ENCODE measurements at regions of chr11 and their contacts with region 1.

Region 1: DNA sequence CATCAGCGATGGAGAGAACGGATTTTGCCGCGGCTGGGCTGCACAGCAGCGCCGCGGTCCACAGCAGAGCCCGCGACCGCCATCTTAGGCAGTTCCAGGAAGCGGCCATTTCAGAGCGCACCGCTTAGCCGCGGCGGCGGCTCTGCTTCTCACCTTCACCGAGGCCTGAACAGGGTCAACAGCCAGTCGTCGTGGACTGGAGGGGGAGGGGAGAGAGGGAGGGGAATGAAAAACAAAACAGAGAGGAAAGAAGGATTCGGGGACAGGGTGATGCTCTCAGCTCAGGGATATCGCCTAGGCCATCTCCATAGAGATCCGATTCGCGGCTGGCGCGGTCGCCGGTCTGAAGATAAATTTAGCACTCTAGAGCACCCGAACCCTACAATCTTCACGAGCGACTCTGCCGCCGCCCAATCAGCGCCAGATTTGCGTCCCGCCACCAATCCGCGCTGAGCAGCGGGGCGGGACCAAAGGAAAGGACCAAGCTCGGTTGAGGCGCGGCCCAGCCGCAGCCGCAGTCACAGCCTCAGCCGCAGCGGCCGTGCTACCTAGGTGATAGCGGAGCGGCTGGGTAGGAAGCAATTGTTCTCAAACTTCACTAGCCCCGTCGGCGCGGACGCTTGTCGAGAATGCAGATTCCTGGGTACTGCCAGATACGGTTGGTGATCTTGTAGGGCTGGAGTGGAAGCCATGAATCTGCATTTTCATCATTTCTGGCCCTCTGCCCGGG is at the start of gene ZBED5:
- DNase-seq: peak; percentile 97 to 98 (median 98)
- ATAC-seq: peak; percentile 96 to 98 (median 97)
- H3K4me3 ChIP-seq: peak within 1 kb of the TSS; percentile 62 to 89 (median 80)
- H3K27ac ChIP-seq: peak within 1 kb of the TSS; percentile 93 to 99 (median 96)
- H3K4me1 ChIP-seq: peaks cover 0 to 61% (median 23%) of the 10 kb centered on the region in 12 donors
- H3K27me3 ChIP-seq: no peaks in the 10 kb centered on the region
- CTCF ChIP-seq: peak in 4 of 12 donors; percentile 31 to 42 (median 38)
- POLR2A ChIP-seq: peak in 1 of 2 donors; percentile 98
- total RNA-seq, gene ZBED5: 26.3 to 49.1 (median 38.9) TPM

Region 2: GRCh38 chr11:10750838-10751580 is 106.9 kb before region 1 on chr11 and contains the start of gene CTR9:
- intact Hi-C with region 1: loop called in 1 of 10 experiments (anchors 2 kb)
- DNase-seq: peak; percentile 93 to 96 (median 96)
- ATAC-seq: peak; percentile 96 to 98 (median 98)
- H3K4me3 ChIP-seq: peak within 1 kb of the TSS; percentile 61 to 98 (median 92)
- H3K27ac ChIP-seq: peak within 1 kb of the TSS; percentile 87 to 98 (median 92)
- H3K4me1 ChIP-seq: peaks cover 0 to 25% (median 14%) of the 10 kb centered on the region in 12 donors
- H3K27me3 ChIP-seq: no peaks in the 10 kb centered on the region
- CTCF ChIP-seq: peak in 7 of 12 donors; percentile 16 to 59 (median 34)
- POLR2A ChIP-seq: peak in 1 of 2 donors; percentile 93
- total RNA-seq, gene CTR9: 14.7 to 28.4 (median 20.8) TPM

Region 3: DNA sequence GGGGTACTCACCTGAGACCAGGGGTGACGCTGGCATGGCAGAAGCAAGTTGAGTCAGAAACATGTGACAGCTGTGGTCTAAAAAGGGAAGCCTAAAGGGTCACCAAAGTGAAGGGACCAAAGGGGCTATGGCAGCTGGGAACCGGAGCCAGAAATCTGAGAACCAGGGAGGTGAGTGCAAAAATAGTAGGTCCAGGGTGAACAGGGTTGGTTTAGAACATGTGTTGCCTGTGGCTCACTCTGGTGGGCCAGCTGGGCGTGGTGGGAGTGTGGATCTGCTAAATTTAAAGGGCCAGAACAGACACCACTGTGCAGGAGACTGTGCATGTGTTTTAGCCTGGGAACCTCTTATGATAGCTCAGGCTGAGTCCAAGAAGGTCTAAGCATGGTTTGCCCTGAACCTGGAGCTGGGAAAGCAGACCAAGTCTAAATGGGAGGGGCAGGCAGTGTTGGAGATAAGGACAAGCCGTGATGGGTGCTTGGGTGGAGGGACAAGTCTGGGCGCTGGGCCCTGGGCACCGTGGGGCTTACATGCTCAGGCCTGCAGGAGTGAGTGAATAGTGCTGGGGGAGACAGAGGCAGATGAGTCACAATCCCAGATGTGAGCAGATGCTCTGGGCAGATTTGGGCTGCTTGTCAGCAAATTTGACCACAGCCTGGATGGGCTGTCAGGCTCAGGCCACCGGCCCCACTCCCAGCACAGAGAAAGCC is 41.4 kb after region 1 on chr11:
- intact Hi-C with region 1: loop called (anchors 1 to 10 kb)
- DNase-seq: peak; percentile 45 to 81 (median 75)
- ATAC-seq: peak; percentile 21 to 77 (median 68)
- H3K4me3 ChIP-seq: peak overlapping the region in 1 of 12 donors; percentile 4
- H3K27ac ChIP-seq: peak overlapping the region; percentile 51 to 98 (median 90)
- H3K4me1 ChIP-seq: peaks cover 10 to 55% (median 33%) of the 10 kb centered on the region in 12 donors
- H3K27me3 ChIP-seq: no peaks in the 10 kb centered on the region
- CTCF ChIP-seq: no peak
- POLR2A ChIP-seq: no peak

Region 4: GRCh38 chr11:10906513-10906912 is 48.6 kb after region 1 on chr11:
- intact Hi-C with region 1: loop called in 4 of 10 experiments (anchors 2 to 10 kb)
- DNase-seq: no peak
- ATAC-seq: peak in 3 of 4 donors; percentile 35 to 60 (median 40)
- H3K4me3 ChIP-seq: no peak overlapping the region
- H3K27ac ChIP-seq: no peak overlapping the region
- H3K4me1 ChIP-seq: peaks cover 0 to 22% (median 3%) of the 10 kb centered on the region in 12 donors
- H3K27me3 ChIP-seq: no peaks in the 10 kb centered on the region
- CTCF ChIP-seq: peak in 9 of 12 donors; percentile 7 to 47 (median 26)
- POLR2A ChIP-seq: no peak

Region 5: DNA sequence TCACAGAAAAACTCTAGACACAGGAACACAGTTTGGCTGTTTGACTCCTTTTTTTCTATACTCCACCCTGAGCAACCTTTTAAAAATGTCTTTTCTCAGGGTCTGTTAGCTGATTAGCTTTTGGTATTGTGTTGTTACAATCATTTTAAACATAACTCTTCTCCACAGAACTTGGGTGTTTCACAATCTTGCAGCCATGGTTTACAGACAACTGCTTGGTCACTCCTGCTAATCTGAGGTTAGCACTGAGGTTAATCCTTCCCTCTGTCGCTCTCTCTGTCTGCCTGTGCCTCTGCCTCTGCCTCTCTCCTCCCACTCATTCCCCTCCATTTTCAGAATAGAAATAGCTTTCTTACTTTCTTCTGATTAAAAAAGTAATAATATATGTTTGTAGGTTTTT is 62.3 kb after region 1 on chr11:
- intact Hi-C with region 1: loop called in 1 of 10 experiments (anchors 10 kb)
- DNase-seq: no peak
- ATAC-seq: no peak
- H3K4me3 ChIP-seq: no peak overlapping the region
- H3K27ac ChIP-seq: no peak overlapping the region
- H3K4me1 ChIP-seq: peaks cover 0 to 3% (median 0%) of the 10 kb centered on the region in 12 donors
- H3K27me3 ChIP-seq: no peaks in the 10 kb centered on the region
- CTCF ChIP-seq: no peak
- POLR2A ChIP-seq: no peak

Region 6: DNA sequence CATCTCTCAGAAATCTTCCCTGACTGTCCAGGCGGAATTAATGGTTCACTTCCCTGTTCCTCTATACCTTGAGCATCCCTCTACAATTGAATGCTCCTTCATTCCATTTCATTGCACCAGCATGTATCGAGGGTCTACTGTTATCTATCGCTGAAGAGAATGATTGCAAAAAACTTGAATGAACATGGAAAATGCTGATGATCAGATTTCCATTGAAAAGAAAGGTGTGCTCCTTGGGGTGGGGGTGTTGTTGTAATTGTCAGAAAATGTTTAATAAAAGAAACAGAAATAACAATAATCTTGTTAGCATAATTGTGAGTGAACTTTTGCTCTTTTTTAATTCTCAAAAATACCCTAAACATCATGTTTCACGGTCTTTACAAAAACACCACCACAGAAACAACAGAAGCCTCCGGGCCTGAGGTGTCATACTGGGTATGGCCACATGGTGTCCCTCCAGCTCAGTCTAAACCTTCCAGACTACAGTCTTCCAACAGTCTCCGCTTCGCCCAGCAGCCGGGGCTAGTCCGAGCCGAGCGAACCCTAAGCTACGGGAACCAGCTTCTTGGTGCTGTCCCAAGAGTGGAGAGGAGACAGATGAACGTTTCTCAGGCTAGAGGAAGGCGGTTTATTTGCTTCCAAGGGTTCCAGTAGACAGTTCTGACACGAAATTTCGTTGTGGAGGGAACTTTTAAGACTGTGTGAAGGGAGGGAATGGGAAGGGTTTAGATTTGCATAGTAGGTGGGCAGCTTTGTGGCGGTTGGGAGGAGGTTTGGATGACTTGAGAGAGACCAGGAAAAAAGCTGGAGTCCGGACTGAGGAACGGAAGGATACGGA is 75.8 kb after region 1 on chr11:
- intact Hi-C with region 1: loop called in 5 of 10 experiments (anchors 1 to 10 kb)
- DNase-seq: peak; percentile 88 to 93 (median 91)
- ATAC-seq: peak; percentile 83 to 95 (median 92)
- H3K4me3 ChIP-seq: peak overlapping the region in 11 of 12 donors; percentile 27 to 60 (median 50)
- H3K27ac ChIP-seq: peak overlapping the region in 11 of 12 donors; percentile 30 to 84 (median 73)
- H3K4me1 ChIP-seq: peaks cover 0 to 24% (median 6%) of the 10 kb centered on the region in 12 donors
- H3K27me3 ChIP-seq: peaks cover 0 to 12% (median 0%) of the 10 kb centered on the region in 9 donors
- CTCF ChIP-seq: peak; percentile 88 to 99 (median 96)
- POLR2A ChIP-seq: peak in 1 of 2 donors; percentile 30

Region 7: DNA sequence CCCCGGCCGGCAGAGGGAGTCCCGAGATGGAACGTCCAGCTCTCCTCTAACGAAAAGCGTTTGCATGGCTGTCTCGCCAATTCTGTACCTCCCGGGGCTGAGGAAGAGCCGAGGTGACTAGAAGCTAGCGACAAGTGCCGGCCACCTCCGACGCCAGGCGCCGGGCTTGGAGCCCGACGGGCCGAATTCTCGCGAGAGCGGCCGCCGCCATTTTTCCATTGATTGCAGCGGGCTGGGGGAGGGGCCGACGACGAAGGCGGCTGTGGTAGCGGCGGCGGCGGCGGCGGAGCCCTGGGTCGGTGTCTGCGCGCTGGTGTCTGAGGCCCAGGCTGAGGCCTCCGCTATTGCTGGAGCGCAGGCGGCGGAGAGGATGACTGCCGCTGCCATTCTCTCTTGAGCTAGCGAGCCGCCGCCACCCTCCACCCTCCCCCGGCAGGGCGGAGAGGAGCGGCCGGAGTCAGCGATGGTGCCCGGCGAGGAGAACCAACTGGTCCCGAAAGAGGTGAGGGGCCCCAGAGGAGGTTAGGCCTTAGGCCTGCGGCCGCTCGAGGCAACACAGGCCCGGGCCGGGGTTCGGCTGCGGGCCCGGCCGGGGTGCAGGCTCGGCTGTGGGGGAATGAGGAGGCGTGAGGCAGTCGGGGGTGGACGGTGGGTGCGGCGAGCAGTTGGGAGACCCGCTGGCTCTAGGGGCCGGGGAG is 984.0 kb after region 1 on chr11 and contains the start of gene USP47:
- intact Hi-C with region 1: loop called in 1 of 10 experiments (anchors 5 kb)
- DNase-seq: peak; percentile 93 to 96 (median 95)
- ATAC-seq: peak; percentile 78 to 93 (median 92)
- H3K4me3 ChIP-seq: peak within 1 kb of the TSS; percentile 54 to 86 (median 77)
- H3K27ac ChIP-seq: peak within 1 kb of the TSS; percentile 87 to 99 (median 96)
- H3K4me1 ChIP-seq: peaks cover 0 to 51% (median 36%) of the 10 kb centered on the region in 12 donors
- H3K27me3 ChIP-seq: no peaks in the 10 kb centered on the region
- CTCF ChIP-seq: peak in 11 of 12 donors; percentile 33 to 77 (median 57)
- POLR2A ChIP-seq: peak in 1 of 2 donors; percentile 82
- total RNA-seq, gene USP47: 42.3 to 89.6 (median 54.3) TPM